A549 (cell line): ENCODE measurements at regions of chr1 and their contacts with region 1.

Region 1: DNA sequence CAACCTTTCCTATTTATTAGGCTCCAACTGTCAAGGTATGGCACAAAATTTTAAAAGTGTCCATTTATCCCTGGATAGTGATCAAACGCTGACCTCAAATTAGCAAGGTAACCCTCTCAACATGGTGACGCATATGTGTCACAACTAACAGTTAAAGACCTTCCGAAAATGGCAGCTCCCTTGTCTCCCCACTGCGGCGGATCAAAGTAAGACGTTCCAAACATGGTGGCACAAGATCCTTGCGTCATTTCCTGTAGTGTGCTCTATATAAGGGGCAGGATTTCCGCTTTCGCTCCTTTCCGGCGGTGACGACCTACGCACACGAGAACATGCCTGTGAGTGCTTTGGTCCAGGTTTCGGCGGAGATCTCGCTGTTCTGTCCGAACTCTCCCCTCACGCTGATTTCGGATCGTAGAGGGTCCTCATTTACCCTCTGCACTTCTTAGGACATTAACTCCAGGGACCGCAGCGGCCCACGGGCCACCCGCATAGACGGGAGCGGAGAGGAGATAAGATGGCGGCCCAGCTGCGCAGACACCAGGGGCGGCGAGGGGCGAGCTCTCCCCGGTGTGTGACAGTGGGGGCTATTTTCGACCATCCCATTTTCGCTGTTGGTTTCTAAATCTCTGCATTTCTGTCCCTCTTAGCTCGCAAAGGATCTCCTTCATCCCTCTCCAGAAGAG is at the start of gene RPS27:
- DNase-seq: peak; percentile 97 to 99
- ATAC-seq: peak; percentile 56 to 58
- H3K4me3 ChIP-seq: peak within 1 kb of the TSS; percentile 73
- H3K27ac ChIP-seq: peak within 1 kb of the TSS; percentile 93 to 94
- H3K4me1 ChIP-seq: peaks cover 14% of the 10 kb centered on the region; the same call in 2 of the 3 replicates
- CTCF ChIP-seq: no peak
- EP300 ChIP-seq: no peak
- POLR2A ChIP-seq: peak; percentile 100
- RAD21 ChIP-seq: no peak
- polyA plus RNA-seq, gene RPS27: 4,831 and 9,152 TPM in 2 replicates

Region 2: DNA sequence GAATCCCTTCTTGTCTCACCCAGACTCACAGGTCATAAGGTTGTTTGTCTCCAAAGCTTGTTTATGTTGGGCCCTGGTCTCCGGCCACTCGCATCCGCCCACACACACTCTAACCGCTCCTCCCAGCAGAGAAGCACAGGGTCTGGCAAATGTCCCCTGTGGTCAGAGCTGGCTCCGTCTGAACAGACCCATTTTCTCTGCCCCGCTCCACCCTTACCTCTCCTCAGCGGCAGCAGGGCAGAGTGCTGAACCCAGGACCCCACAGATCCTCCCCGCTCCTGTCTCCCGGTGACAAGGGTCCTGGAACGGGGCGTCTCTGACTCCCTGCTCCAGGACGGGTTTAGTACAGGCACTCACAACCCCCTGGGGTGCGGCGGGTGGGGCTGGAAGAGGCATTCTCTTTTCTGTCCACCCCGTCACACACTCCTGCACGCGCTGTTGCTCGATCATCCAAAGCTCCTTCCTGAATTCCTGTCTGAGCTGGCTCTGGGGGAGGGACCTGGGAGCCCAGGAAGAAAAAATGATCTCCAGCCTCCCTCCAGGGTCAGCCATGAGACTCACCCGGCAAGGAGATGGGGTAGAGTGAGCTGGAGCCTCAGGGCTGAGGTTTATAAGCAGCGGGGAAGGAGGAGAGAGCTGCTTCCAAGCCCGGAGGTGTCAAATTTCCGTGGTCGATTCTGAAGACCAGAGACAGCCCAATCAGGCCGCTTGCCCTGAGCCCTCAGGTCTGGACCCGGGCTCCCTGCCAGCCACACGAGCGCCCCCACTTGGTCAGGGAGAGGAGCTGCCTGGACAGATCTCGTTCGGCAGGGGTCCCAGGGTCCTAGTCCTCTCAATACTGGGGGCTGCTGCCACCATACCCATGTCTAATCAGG is 363.4 kb before region 1 on chr1 and contains the start of gene S100A13:
- CTCF ChIA-PET with region 1: no interaction called
- POLR2A ChIA-PET with region 1: no interaction called
- DNase-seq: peak; percentile 85 to 91
- ATAC-seq: peak; percentile 80 to 87
- H3K4me3 ChIP-seq: peak within 1 kb of the TSS; percentile 57
- H3K27ac ChIP-seq: peak within 1 kb of the TSS; percentile 92
- H3K4me1 ChIP-seq: peaks cover 18% of the 10 kb centered on the region
- CTCF ChIP-seq: peak; percentile 73
- EP300 ChIP-seq: no peak
- POLR2A ChIP-seq: peak; percentile 75
- RAD21 ChIP-seq: peak; percentile 54 to 72
- polyA plus RNA-seq, gene S100A13: 98.9 and 113 TPM in 2 replicates

Region 3: DNA sequence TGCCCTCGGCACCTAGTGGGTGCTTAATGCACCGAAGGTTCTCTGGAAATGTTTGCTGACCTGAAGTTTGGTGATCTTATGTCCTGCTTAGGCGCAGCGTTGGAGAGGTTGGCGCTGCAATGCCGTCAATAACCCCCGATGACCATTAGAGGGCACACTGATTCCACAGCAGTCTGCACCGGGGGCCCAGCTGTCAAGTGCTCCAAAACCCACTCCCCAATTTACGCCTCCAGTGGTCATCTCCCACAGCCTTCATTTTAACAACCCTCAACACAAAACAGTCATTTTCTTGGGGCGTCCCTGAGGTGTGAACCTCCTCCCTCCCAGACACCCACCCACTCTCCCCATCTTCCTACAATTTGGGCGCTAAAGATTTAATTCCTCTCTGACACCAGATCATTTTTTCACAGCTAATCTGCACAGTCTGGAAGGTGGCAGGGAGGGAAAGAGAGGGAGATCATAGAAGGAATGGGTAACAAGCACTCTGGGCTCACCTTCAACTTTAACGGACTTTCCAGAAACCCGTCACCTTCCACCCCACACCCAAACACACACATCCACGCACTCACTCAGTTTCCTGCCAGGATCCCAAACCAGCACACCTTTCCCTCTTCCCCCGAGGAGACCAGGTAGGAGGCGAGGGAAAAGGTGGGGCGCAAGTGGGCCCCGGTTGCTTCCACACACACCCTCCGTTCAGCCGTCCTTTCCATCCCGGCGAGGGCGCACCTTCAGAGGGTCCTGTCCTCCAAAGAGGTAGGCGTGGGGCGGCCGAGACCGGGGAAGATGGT is 312.7 kb before region 1 on chr1:
- CTCF ChIA-PET with region 1: interaction called, 14 read pairs
- POLR2A ChIA-PET with region 1: interaction called, 9 read pairs
- DNase-seq: peak; percentile 68 to 69
- ATAC-seq: peak; percentile 65 to 79; a peak in 5 of 6 replicates
- H3K4me3 ChIP-seq: peak overlapping the region; percentile 48
- H3K27ac ChIP-seq: peak overlapping the region in 1 of 2 experiments; percentile 81; a peak in 5 of 6 replicates
- H3K4me1 ChIP-seq: peaks cover 11% of the 10 kb centered on the region; the same call in 2 of the 3 replicates
- CTCF ChIP-seq: peak; percentile 94
- EP300 ChIP-seq: no peak
- POLR2A ChIP-seq: no peak
- RAD21 ChIP-seq: peak; percentile 95

Region 4: DNA sequence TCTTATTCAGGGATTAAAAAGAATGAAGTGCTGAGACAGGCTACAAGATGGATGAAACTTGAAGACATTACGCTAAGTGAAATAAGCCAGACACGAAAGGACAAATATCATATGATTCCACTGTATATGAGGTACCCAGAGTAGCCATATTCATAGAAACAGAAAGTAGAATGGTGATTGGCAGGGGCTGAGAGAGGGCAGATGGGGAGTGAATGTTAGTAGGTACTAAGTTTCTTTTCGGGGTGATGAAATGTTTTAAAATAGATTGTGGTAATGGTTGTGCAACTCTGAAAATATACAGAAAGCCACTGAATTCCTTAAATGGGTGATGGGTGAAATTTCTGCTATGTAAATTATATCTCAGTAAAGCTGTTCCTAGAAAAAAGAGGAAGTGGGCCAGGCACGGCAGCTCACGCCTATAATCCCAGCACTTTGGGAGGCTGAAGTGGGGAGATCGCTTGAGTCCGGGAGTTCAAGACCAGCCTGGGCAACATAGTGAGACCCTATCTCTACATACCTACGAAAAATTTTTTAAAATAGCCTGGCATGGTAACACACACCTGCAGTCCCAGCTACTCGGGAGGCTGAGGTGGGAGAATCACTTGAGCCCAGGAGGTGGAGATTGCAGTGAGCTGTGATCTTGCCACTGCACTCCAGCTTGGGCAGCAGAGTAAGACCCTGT is 199.5 kb before region 1 on chr1:
- CTCF ChIA-PET with region 1: interaction called, 51 read pairs
- POLR2A ChIA-PET with region 1: interaction called, 8 read pairs
- DNase-seq: no peak
- ATAC-seq: no peak
- H3K4me3 ChIP-seq: no peak overlapping the region
- H3K27ac ChIP-seq: no peak overlapping the region
- H3K4me1 ChIP-seq: no peaks in the 10 kb centered on the region
- CTCF ChIP-seq: no peak
- EP300 ChIP-seq: no peak
- POLR2A ChIP-seq: no peak
- RAD21 ChIP-seq: no peak

Region 5: DNA sequence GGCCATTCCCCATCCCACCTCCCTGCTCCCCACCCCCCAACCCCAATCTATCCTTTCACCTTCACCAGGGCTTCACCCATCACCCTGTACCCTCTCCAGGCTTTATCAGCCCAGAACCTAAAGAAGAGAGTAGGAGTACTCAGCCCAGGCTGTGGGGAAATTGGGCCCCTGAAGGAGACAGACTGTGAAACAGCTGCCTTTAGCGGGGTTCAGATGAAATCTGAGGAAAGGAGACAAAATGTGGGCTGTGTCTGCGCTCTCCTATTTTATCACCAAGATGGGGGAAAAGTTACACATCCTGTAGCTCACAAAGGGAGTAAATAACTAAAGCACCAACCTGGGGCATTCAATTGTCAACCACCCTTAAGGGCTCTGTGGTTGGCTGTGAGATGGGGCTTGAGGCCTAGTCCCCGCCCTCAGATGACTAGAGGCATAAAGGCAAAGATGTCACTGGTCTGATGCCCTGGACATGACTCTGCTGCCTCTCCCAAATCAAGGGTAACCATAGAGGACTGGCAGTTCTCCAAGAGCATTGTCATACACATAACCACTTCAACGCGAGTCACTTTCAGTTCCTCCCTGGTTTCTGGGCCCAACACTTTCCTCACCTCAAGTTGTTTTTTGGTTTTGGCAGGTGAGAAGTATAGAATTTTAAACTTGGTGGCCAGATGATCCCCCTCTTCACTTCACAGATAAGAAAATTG is 185.4 kb before region 1 on chr1:
- CTCF ChIA-PET with region 1: interaction called, 51 read pairs
- POLR2A ChIA-PET with region 1: no interaction called
- DNase-seq: peak; percentile 37 to 62
- ATAC-seq: peak; percentile 56 to 58; a peak in 4 of 6 replicates
- H3K4me3 ChIP-seq: no peak overlapping the region
- H3K27ac ChIP-seq: peak overlapping the region; percentile 64 to 69; a peak in 4 of 6 replicates
- H3K4me1 ChIP-seq: peaks cover 14% of the 10 kb centered on the region; the same call in 2 of the 3 replicates
- CTCF ChIP-seq: no peak
- EP300 ChIP-seq: no peak
- POLR2A ChIP-seq: no peak
- RAD21 ChIP-seq: no peak

Region 6: DNA sequence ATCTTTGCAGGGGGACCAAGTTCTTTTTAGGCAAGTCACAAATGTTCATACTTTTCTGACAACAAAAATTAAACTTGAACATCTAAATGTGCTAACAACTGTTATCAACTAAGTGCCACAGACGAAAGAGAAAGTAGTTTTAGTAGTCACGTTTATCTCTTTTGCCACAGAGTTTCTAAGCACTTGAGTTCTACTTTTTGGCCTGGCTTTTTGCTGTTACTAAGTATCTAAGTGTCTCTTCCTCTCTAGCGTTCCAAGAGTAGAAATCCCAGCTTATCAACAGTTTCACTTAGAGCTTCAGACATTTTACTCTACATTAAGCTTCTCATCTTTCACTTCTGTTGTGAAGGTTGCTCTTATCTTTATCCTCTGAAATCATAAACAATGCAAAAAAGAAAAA is 102.1 kb before region 1 on chr1:
- CTCF ChIA-PET with region 1: no interaction called
- POLR2A ChIA-PET with region 1: no interaction called
- DNase-seq: no peak
- ATAC-seq: no peak
- H3K4me3 ChIP-seq: no peak overlapping the region
- H3K27ac ChIP-seq: no peak overlapping the region
- H3K4me1 ChIP-seq: no peaks in the 10 kb centered on the region
- CTCF ChIP-seq: no peak
- EP300 ChIP-seq: no peak
- POLR2A ChIP-seq: no peak
- RAD21 ChIP-seq: no peak

Region 7: GRCh38 chr1:153922972-153923925 is 67.4 kb before region 1 on chr1 and contains the start of gene GATAD2B:
- CTCF ChIA-PET with region 1: interaction called, 15 read pairs
- POLR2A ChIA-PET with region 1: interaction called, 12 read pairs
- DNase-seq: peak; percentile 98 to 100
- ATAC-seq: peak; percentile 91 to 98
- H3K4me3 ChIP-seq: peak within 1 kb of the TSS; percentile 80
- H3K27ac ChIP-seq: peak within 1 kb of the TSS; percentile 88 to 98
- H3K4me1 ChIP-seq: peaks cover 24% of the 10 kb centered on the region
- CTCF ChIP-seq: no peak
- EP300 ChIP-seq: no peak
- POLR2A ChIP-seq: peak; percentile 64; the same call in 1 of the 2 replicates
- RAD21 ChIP-seq: no peak; a peak in 1 of 5 replicates
- polyA plus RNA-seq, gene GATAD2B: 4.9 and 11.5 TPM in 2 replicates

Region 8: GRCh38 chr1:153958111-153958960 is 32.3 kb before region 1 on chr1 and contains the start of gene CRTC2:
- CTCF ChIA-PET with region 1: interaction called, 26 read pairs
- POLR2A ChIA-PET with region 1: interaction called, 30 read pairs
- DNase-seq: peak; percentile 98 to 99
- ATAC-seq: peak; percentile 85 to 90
- H3K4me3 ChIP-seq: peak within 1 kb of the TSS; percentile 94
- H3K27ac ChIP-seq: peak within 1 kb of the TSS; percentile 92 to 95
- H3K4me1 ChIP-seq: peaks cover 32% of the 10 kb centered on the region
- CTCF ChIP-seq: no peak
- EP300 ChIP-seq: no peak
- POLR2A ChIP-seq: peak; percentile 47
- RAD21 ChIP-seq: 0 out of 5 replicates have a peak, but pooled peaks of 1 of the 2 experiments have one; percentile 13
- polyA plus RNA-seq, gene CRTC2: 19.7 and 23.9 TPM in 2 replicates

Region 9: DNA sequence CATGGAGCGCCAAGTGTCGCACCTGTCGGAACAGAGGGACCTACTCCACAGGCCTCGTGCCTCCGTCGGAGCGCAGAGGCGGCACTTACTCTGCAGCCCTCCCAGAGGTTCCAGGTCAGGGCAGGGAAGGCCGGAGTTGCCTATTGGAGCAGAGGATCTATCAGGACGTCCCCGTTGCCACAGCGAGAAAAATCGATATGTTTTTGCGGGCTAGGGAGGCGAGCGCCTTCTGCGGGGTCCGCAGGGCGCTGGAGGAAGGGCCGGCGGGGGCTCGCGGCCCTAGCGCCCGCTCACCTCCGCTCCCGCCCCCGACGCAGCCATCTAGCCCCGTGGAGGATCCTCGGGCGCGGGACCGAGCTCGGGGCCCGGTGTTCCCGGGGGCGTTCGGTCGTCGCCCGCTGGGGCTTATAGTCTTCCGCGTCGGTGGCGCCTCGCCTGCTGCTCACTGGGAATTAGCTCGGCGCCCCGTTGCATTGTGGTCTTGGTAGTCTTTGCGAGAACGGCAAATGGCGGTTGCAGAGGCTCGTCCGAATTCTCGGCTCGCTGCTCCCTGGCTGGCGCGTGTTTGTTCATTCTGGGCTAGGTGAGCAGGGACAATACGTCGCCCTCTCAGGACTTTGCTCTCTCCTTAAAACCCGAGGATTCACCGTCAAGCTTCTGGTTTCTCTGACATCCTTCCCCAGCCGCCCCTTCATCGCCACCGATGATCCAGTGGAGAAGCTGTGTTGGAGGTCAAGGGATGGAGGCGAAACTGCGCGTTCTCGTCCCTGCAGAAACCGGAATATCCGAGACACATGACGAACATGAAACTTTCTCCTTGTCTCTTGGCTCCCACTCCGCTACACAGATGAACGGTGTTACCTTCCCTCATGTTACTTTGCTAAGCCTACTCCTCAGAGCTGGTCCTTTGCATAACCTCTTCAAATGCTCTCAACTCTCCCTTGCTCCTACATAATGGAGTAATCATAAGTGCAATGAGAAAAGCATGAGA is 13.1 kb before region 1 on chr1 and contains the start of gene JTB:
- CTCF ChIA-PET with region 1: interaction called, 90 read pairs
- POLR2A ChIA-PET with region 1: interaction called, 52 read pairs
- DNase-seq: peak; percentile 82 to 90
- ATAC-seq: peak; percentile 95 to 98
- H3K4me3 ChIP-seq: peak within 1 kb of the TSS; percentile 92
- H3K27ac ChIP-seq: peak within 1 kb of the TSS; percentile 88 to 95
- H3K4me1 ChIP-seq: peaks cover 18% of the 10 kb centered on the region
- CTCF ChIP-seq: no peak
- EP300 ChIP-seq: no peak
- POLR2A ChIP-seq: peak; percentile 56
- RAD21 ChIP-seq: no peak
- polyA plus RNA-seq, gene JTB: 162 and 178 TPM in 2 replicates